PC-9 (cell line): ENCODE measurements at regions of chr16 and their contacts with region 1.

Region 1: DNA sequence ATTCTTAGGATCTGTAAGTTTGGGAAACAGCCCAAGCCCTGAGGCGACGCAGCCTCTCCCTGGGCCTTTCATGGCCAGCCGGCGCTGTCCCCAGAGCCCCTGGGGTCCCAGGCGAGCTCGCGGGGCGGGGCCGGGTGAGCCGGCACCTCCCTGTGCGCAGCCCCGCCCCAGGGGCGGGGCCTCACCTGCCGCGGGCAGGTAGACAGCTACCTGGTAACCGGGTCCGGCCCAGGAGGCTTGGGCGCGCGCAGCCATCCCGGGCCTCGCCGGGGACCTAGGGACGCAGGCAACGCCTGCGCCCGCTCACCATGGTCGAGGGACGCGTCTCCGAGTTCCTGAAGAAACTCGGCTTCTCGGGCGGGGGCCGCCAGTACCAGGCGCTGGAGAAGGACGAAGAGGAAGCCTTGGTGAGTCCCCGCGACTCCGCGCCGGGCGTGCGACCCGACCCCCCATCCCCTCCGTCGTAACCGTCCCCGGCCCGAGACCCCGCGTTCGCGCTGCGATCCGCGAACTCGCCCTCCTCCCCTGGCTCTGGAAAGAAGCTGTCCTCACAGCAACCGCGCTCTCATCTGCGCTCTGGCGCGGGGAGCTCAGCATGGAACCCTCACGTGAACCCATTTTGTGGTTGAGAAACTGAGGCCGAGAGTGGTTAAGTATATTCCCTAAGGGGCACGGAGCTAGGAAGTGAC is at the start of gene ATP2C2:
- DNase-seq: peak; percentile 68 to 79
- H3K4me3 ChIP-seq: peak within 1 kb of the TSS; percentile 91
- H3K27ac ChIP-seq: no peak within 1 kb of the TSS; the same call in 1 of the 2 replicates
- H3K4me1 ChIP-seq: peaks cover 33% of the 10 kb centered on the region
- H3K27me3 ChIP-seq: no peaks in the 10 kb centered on the region
- CTCF ChIP-seq: no peak
- total RNA-seq, gene ATP2C2: 11.9 and 17.2 TPM in 2 replicates

Region 2: DNA sequence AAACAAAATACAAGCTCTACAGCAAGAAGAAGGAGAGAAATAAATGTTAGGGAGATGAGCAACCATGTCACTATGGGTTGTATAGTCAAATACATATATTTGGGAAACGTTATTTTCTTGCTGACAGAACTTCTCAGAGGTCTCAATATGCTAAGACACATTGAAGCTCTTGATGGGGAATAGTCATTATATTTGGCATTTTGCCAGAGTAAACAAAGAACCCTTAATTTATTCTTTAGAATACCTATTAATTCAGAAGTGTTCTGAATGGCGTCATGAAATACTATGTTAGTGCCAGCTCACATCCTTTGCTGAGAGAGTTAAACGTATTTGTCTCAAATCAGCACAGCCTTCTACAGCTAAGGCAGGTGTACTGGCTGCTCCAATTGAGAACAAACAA is 1282.8 kb before region 1 on chr16:
- CTCF ChIA-PET with region 1: no interaction called
- POLR2A ChIA-PET with region 1: no interaction called
- intact Hi-C with region 1: no loop called
- DNase-seq: no peak
- H3K4me3 ChIP-seq: no peak overlapping the region
- H3K27ac ChIP-seq: no peak overlapping the region
- H3K4me1 ChIP-seq: no peaks in the 10 kb centered on the region
- H3K27me3 ChIP-seq: peaks cover 9% of the 10 kb centered on the region
- CTCF ChIP-seq: no peak

Region 3: DNA sequence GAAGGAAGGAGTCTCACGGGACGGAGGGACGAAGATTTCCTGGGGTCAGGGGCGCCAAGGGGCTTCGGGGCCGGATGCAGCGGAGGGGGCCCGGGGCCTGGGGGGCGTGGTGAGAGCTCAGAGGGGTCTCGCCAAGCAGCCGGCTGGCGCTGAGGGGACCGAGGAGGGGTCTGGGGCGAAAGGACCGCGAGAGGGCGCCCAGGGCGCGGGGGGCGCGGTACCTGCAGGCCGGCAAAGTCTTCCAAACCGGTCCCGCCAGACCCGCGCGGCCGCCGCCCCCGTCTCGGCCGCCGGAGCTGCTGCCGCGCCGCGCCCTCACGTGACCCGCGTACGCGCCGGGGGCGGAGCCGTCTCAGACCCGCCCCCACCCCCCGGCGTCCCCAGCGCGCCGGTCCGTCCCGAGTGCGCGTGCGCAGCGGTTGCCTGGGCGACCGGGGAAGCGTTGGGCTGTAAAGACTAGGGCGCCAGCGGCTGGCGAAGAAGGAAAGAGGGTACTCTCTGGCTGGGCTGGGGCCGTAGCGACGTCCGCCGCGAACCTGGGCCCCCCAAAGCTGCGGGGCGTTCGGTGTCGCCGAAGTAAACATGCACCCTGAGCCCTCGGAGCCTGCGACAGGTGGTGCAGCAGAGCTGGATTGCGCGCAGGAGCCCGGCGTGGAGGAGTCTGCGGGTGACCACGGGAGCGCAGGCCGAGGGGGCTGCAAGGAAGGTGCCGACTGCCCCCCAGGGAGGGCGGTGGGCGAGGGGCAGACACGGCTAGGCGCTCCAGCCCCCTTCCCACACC is 223.4 kb before region 1 on chr16 and contains the starts of genes DNAAF1 and HSDL1:
- CTCF ChIA-PET with region 1: interaction called, 13 read pairs
- POLR2A ChIA-PET with region 1: no interaction called
- intact Hi-C with region 1: no loop called
- DNase-seq: peak; percentile 61 to 95
- H3K4me3 ChIP-seq: peak within 1 kb of the TSS; percentile 65
- H3K27ac ChIP-seq: no peak within 1 kb of the TSS
- H3K4me1 ChIP-seq: peaks cover 6% of the 10 kb centered on the region; the same call in 1 of the 2 replicates
- H3K27me3 ChIP-seq: no peaks in the 10 kb centered on the region
- CTCF ChIP-seq: peak; percentile 43; the same call in 1 of the 2 replicates
- total RNA-seq, gene DNAAF1: 1.2 and 3.9 TPM in 2 replicates
- total RNA-seq, gene HSDL1: 30.5 and 32.1 TPM in 2 replicates

Region 4: DNA sequence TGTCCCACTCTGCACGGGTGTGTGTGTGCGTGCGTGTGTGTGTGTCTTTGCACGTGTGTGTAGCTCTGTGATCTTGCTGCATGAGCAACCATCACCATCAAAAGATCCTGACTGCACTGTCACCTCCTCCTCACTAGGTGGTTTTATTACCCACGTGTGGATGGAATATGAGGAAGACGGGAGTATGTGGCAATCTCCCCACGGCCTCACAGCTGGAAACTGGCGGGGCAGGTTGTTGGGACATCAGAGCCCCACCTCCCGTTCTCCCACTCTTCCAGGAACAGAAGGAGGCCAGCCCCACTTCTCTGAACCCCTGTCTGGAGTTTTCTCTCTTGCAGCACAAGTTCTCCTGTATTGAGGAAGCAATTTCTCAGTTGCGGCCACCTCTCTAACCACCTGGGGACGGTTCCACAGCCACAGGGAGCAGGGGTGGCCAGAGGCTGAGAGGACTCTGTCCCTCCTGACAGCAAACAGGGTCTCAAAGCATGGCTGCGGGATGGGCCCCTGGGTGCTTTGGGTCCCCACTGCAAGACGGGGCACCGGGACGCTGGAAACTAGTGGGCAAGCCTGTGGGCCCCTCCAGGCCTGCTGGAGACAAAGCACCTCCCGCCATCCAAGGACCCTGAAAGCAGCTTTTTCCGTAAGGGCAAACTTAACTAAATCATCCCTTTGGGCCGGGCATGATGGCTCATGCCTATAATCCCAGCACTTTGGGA is 28.0 kb before region 1 on chr16:
- CTCF ChIA-PET with region 1: no interaction called
- POLR2A ChIA-PET with region 1: no interaction called
- intact Hi-C with region 1: no loop called
- DNase-seq: peak; percentile 72 to 84
- H3K4me3 ChIP-seq: no peak overlapping the region
- H3K27ac ChIP-seq: no peak overlapping the region
- H3K4me1 ChIP-seq: peaks cover 12% of the 10 kb centered on the region
- H3K27me3 ChIP-seq: no peaks in the 10 kb centered on the region
- CTCF ChIP-seq: peak; percentile 63